Heart right ventricle (tissue), 16 donors: ENCODE measurements at regions of chr6 and their contacts with region 1.

Region 1: GRCh38 chr6:83884523-83884922 is 25.0 kb downstream of the CYB5R4 start:
- DNase-seq: no peak
- ATAC-seq: peak in 3 of 8 donors; percentile 12 to 42 (median 39)
- H3K4me3 ChIP-seq: no peak overlapping the region
- H3K27ac ChIP-seq: no peak overlapping the region
- H3K4me1 ChIP-seq: peaks cover 0 to 5% (median 0%) of the 10 kb centered on the region in 9 donors
- H3K27me3 ChIP-seq: no peaks in the 10 kb centered on the region
- CTCF ChIP-seq: peak; percentile 27 to 82 (median 71)

Region 2: GRCh38 chr6:84220809-84221409 is 336.4 kb after region 1 on chr6:
- intact Hi-C with region 1: loop called in 9 of 10 experiments (anchors 1 to 5 kb)
- DNase-seq: no peak
- ATAC-seq: no peak
- H3K4me3 ChIP-seq: no peak overlapping the region
- H3K27ac ChIP-seq: no peak overlapping the region
- H3K4me1 ChIP-seq: no peaks in the 10 kb centered on the region
- H3K27me3 ChIP-seq: no peaks in the 10 kb centered on the region
- CTCF ChIP-seq: peak; percentile 24 to 70 (median 65)

Region 3: GRCh38 chr6:84227434-84228197 is 343.1 kb after region 1 on chr6 and contains the start of gene CEP162:
- intact Hi-C with region 1: loop called in 6 of 10 experiments (anchors 2 to 5 kb)
- DNase-seq: peak; percentile 90 to 92
- ATAC-seq: peak; percentile 97 to 99 (median 98)
- H3K4me3 ChIP-seq: peak within 1 kb of the TSS; percentile 66 to 90 (median 82)
- H3K27ac ChIP-seq: peak within 1 kb of the TSS; percentile 78 to 94 (median 86)
- H3K4me1 ChIP-seq: peaks cover 0 to 15% (median 7%) of the 10 kb centered on the region in 9 donors
- H3K27me3 ChIP-seq: peaks cover 0 to 25% (median 9%) of the 10 kb centered on the region in 7 donors
- CTCF ChIP-seq: peak; percentile 29 to 82 (median 68)
- total RNA-seq, gene CEP162: 2.7 to 5.6 (median 3.8) TPM

Region 4: GRCh38 chr6:84921891-84922290 is 1037.4 kb after region 1 on chr6:
- intact Hi-C with region 1: no loop called
- DNase-seq: no peak
- ATAC-seq: no peak
- H3K4me3 ChIP-seq: no peak overlapping the region
- H3K27ac ChIP-seq: no peak overlapping the region
- H3K4me1 ChIP-seq: no peaks in the 10 kb centered on the region
- H3K27me3 ChIP-seq: no peaks in the 10 kb centered on the region
- CTCF ChIP-seq: no peak

Region 5: GRCh38 chr6:85323435-85324040 is 1439.0 kb after region 1 on chr6:
- intact Hi-C with region 1: loop called in 1 of 10 experiments (anchors 10 kb)
- DNase-seq: peak; percentile 24 to 49
- ATAC-seq: peak in 3 of 8 donors; percentile 51 to 64 (median 54)
- H3K4me3 ChIP-seq: no peak overlapping the region
- H3K27ac ChIP-seq: no peak overlapping the region
- H3K4me1 ChIP-seq: no peaks in the 10 kb centered on the region
- H3K27me3 ChIP-seq: peaks cover 0 to 18% (median 0%) of the 10 kb centered on the region in 7 donors
- CTCF ChIP-seq: peak; percentile 15 to 83 (median 76)